ENCODE measurements at regions of chr2 and their contacts with region 1.

Region 1: DNA sequence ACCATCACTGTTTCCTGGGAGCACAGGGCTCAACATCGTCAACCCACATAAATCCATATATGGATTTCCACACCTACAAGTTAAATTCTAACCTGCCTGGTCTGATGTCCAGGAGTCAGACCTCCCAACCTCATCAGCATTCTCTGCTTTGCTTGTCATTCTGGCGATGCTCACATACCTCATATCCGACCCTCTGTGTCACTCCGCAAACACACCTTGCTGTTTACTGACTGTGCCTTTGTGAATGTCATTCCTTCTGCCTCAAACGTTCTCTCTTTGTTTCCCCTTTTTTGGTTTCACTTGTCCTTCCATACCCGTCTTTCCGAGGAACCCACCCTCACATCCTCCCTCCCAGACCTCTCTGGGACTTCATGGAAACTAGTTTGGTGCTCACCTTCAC is 187.1 kb downstream of the ACTR3 start:
- DNase-seq: no peak
- H3K4me3 Mint-ChIP-seq: no peak overlapping the region
- H3K27ac Mint-ChIP-seq: no peak overlapping the region
- H3K4me1 Mint-ChIP-seq: peaks cover 6% of the 10 kb centered on the region
- H3K27me3 Mint-ChIP-seq: peaks cover 59% of the 10 kb centered on the region
- CTCF ChIP-seq: no peak

Region 2: DNA sequence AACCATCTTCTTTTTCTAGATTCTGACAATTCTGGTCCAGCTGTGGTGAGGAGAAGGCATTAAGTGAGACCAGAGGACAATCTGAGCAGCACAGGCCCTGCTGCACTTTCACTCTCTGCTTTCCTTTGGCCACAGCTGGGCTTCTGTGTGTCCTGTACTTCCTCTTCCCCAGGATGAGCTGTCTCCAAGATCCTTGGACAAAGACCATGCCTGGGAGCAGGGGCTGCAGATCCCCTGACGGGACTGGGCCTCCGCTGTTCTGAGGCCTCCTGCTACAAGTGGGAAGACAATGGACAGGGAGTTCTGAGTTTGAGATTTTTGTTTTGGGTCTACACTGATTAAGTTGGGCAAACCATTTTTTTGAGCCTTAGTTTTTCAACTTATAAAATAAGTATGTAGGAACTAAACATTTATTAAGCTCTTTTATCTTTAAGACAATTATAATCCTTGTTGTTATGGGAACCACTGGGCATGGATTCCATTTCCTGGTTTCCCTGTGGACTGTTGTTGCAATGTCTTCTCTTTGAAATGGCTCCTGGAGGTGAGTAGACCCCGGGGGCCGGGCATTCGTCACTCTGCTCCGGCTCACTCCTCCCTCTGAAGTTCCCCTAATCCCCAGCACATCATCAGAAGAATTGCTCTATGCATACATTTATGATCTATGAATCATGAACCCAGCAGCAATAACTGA is 79.5 kb after region 1 on chr2:
- CTCF ChIA-PET with region 1: no interaction called
- POLR2A ChIA-PET with region 1: no interaction called
- intact Hi-C with region 1: loop called (anchors 2 kb)
- DNase-seq: no peak
- H3K4me3 Mint-ChIP-seq: no peak overlapping the region
- H3K27ac Mint-ChIP-seq: no peak overlapping the region
- H3K4me1 Mint-ChIP-seq: peaks cover 6% of the 10 kb centered on the region
- H3K27me3 Mint-ChIP-seq: no peaks in the 10 kb centered on the region
- CTCF ChIP-seq: no peak